ENCODE measurements at regions of chr2 and their contacts with region 1.

Region 1: DNA sequence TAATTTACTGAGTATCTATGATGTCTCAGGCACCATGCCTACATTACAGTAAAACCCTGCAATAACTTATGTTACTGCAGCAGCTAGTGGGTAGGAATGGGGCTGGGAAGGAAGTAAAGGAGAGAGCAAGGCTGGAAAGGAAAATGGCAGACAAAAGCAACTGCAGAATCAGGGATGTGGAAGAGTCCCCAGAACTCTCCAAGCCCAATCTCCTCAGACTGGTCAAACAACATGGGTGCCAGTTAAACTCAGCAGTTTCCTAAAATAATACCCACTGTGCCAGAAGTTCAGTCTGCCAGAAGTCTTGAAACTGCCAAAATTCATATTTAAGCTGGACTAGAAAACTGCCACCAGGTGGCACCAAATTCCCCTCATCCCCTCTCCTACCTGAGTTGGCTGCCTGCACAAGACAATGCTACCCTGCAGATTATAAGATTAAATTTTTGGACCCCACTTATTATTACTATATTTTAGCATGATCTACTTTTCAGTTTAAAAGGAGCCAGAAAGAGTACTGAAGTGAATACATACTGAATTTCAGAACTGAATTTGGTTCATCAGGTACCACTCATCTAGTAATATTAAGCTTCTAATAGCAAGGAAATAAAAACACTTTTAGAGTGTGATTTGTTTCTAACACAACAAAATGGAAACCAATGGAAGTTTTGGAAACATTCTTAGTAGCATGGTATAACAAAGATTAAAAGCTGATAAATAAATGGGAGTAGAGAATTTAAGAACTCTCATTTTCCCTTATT is 86.8 kb upstream of the DNER start:
- DNase-seq: peak; percentile 73
- H3K4me3 Mint-ChIP-seq: no peak overlapping the region
- H3K27ac Mint-ChIP-seq: no peak overlapping the region
- H3K4me1 Mint-ChIP-seq: no peaks in the 10 kb centered on the region
- H3K27me3 Mint-ChIP-seq: no peaks in the 10 kb centered on the region

Region 2: GRCh38 chr2:229780856-229781773 is 20.1 kb before region 1 on chr2:
- CTCF ChIA-PET with region 1: interaction called, 12 read pairs
- POLR2A ChIA-PET with region 1: no interaction called
- DNase-seq: no peak
- H3K4me3 Mint-ChIP-seq: no peak overlapping the region
- H3K27ac Mint-ChIP-seq: no peak overlapping the region
- H3K4me1 Mint-ChIP-seq: peaks cover 19% of the 10 kb centered on the region
- H3K27me3 Mint-ChIP-seq: no peaks in the 10 kb centered on the region

Region 3: DNA sequence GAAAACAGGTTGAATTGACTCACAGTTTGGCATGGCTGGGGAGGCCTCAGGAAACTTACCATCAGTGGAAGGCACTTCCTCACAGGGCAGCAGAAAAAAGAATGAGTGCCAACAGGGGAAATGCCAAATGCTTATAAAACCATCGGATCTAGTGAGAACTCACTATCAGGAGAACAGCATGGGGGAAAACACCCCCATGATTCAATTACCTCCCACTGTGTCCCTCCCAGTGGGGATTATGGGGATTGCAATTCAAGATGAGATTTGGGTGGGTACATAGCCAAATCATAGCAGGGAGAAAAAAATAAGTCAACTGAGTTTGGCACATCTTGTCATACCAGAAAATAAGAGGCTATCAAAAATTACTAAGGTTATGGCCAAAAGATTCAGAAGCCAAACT is 24.3 kb after region 1 on chr2:
- CTCF ChIA-PET with region 1: interaction called, 12 read pairs
- POLR2A ChIA-PET with region 1: no interaction called
- DNase-seq: no peak
- H3K4me3 Mint-ChIP-seq: no peak overlapping the region
- H3K27ac Mint-ChIP-seq: no peak overlapping the region
- H3K4me1 Mint-ChIP-seq: peaks cover 23% of the 10 kb centered on the region
- H3K27me3 Mint-ChIP-seq: no peaks in the 10 kb centered on the region

Region 4: DNA sequence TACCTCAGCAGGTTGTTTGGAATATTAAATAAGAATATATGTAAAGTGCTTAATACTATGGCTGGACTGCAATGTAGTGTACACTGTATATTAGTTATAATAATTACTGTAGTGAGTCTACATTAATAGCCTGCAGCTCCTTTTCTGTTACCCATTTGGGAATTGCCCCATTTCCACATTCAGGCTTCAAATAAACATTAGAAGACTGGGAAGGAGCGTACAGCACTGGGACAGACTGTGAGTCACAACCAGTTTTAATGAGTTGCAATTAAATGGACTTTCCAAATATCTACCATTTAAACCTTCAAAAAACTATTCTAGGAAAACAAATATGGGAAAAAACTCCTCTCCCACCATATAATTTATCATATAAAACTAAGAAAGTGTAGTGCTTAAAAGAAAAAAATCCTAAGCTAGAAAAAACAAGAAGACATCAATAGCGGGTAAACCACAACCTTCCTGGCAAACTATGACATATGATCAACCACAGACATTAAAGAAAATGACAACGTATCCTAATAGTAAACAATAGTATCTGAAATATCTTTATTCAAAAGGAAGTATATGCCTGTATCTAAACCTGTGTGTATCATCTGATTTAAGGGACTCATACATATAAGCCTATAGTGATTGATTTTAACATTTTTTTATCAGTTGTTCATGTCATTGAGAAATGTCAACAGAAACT is 34.6 kb after region 1 on chr2:
- CTCF ChIA-PET with region 1: interaction called, 18 read pairs
- POLR2A ChIA-PET with region 1: no interaction called
- DNase-seq: no peak
- H3K4me3 Mint-ChIP-seq: no peak overlapping the region
- H3K27ac Mint-ChIP-seq: no peak overlapping the region
- H3K4me1 Mint-ChIP-seq: peaks cover 43% of the 10 kb centered on the region
- H3K27me3 Mint-ChIP-seq: no peaks in the 10 kb centered on the region

Region 5: GRCh38 chr2:229910832-229911412 is 109.7 kb after region 1 on chr2:
- CTCF ChIA-PET with region 1: interaction called, 53 read pairs
- POLR2A ChIA-PET with region 1: interaction called, 4 read pairs
- DNase-seq: no peak
- H3K4me3 Mint-ChIP-seq: no peak overlapping the region
- H3K27ac Mint-ChIP-seq: peak overlapping the region; percentile 10
- H3K4me1 Mint-ChIP-seq: peaks cover 37% of the 10 kb centered on the region
- H3K27me3 Mint-ChIP-seq: no peaks in the 10 kb centered on the region

Region 6: GRCh38 chr2:229921892-229922445 is 120.8 kb after region 1 on chr2 and contains the start of gene TRIP12:
- CTCF ChIA-PET with region 1: interaction called, 21 read pairs
- POLR2A ChIA-PET with region 1: interaction called, 4 read pairs
- DNase-seq: peak; percentile 89
- H3K4me3 Mint-ChIP-seq: peak within 1 kb of the TSS; percentile 93
- H3K27ac Mint-ChIP-seq: peak within 1 kb of the TSS; percentile 98
- H3K4me1 Mint-ChIP-seq: peaks cover 51% of the 10 kb centered on the region
- H3K27me3 Mint-ChIP-seq: no peaks in the 10 kb centered on the region
- total RNA-seq, gene TRIP12: 224 to 229 TPM